AG04450 (cell line): ENCODE measurements at regions of chr3 and their contacts with region 1.

Region 1: DNA sequence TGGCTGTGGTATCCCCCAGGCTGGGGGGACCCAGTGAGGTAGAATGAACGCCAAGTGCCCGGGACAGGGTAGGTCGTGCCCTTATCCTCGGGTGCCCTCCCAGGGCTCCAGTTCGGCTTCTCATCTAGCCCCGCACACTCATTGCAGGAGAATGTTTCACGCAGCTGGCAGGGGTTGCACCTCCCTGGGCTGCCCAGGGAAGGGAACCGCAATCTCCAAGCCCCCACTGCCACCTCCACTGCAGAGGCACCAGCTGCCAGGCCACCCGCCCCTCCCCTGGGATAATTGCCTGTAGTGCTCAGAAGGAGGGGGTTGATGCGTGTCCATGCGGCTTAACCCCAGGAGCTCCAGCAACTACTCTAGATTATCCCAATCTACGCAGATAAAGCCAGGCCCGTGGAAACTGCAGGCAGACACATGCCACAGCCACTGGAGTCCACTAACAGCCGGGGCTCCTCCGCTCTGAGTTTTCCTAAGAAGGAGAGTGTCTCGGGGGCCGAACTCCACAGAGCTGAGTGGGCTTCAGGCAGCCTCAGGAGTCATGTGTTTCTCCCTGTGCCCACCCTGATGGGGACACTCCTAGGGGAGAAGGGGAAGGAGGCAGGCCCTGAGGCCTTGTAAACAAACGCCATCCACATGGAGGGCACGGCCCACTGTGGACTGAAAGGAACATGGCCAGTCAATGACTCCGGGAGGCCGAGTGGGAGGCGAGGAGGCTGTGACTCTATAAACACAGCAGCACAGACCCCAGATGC is 137.2 kb upstream of the IQSEC1 start:
- DNase-seq: no peak
- H3K4me3 ChIP-seq: no peak overlapping the region
- H3K27ac ChIP-seq: no peak overlapping the region
- H3K27me3 ChIP-seq: peaks cover 2% of the 10 kb centered on the region
- CTCF ChIP-seq: no peak

Region 2: DNA sequence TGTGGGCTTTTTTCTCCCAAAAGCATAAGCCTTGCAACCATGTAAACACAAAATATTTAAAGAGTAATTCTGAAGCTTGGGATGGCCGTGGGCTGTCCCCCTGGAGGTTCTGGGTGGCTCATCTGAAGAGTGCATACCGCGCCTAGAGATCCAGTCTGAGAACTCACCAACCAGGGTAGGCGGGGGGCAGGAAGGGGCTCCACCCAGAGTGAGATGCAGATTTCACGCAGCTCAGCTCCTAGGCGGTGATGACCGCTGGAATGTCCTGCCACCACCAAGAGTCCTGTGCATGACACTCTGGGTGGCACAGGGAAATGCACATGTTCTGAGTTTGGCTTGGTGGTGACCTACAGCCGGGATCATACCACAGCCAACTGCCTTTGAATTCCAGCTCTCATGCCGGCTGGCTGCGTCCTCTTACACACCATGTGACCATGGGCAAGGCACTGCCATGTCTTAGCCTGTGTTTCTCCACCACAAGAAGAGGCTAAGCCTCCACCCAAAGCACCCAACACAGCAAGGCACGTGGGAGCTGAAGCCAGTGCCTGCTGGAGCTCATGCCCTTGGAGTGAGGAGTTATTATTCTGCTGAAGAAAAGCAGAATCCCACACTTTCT is 12.0 kb before region 1 on chr3:
- CTCF ChIA-PET with region 1: no interaction called
- POLR2A ChIA-PET with region 1: no interaction called
- DNase-seq: no peak
- H3K4me3 ChIP-seq: no peak overlapping the region
- H3K27ac ChIP-seq: no peak overlapping the region
- H3K27me3 ChIP-seq: peaks cover 9% of the 10 kb centered on the region
- CTCF ChIP-seq: no peak

Region 3: DNA sequence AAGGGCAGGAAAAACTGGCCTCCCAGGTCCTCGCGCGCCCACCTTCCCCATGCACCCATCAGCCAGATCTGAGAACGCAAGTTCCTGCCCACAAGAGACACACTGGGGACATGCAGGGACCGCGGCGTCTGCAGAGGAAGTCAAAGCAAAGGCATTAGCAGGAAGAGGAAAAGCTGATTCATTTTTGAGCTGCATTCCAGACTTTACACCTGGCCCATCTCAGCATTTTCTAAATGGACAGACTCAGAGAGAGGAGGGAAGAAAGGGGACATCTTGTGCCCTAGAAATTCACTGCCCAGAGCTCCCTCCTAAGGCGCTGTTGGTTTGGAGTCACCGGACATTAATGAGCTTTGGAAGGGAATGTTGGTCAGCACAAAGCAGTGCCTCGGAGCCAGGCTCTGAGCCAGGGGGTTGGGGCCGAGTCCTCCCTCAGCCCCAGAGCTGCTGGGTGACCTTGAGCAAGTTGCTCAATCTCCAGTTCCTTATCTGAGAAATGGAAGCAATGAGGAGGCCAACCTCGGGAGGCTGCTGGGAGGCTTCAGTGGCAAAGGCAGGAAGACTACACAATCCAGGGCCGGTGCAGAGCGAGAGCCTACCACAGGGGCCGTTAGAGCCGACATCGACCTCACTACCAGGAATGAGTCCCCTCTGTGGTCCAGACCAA is 13.3 kb after region 1 on chr3:
- CTCF ChIA-PET with region 1: no interaction called
- POLR2A ChIA-PET with region 1: no interaction called
- DNase-seq: no peak
- H3K4me3 ChIP-seq: no peak overlapping the region
- H3K27ac ChIP-seq: no peak overlapping the region
- H3K27me3 ChIP-seq: no peaks in the 10 kb centered on the region
- CTCF ChIP-seq: no peak

Region 4: GRCh38 chr3:13657660-13658435 is 447.4 kb after region 1 on chr3:
- CTCF ChIA-PET with region 1: interaction called, 18 read pairs
- POLR2A ChIA-PET with region 1: no interaction called
- DNase-seq: no peak
- H3K4me3 ChIP-seq: 0 out of 2 replicates have a peak overlapping the region, but pooled peaks have one; percentile 20
- H3K27ac ChIP-seq: no peak overlapping the region
- H3K27me3 ChIP-seq: peaks cover 10% of the 10 kb centered on the region
- CTCF ChIP-seq: peak; percentile 86